ENCODE measurements at regions of chr7 and their contacts with region 1.

Region 1: DNA sequence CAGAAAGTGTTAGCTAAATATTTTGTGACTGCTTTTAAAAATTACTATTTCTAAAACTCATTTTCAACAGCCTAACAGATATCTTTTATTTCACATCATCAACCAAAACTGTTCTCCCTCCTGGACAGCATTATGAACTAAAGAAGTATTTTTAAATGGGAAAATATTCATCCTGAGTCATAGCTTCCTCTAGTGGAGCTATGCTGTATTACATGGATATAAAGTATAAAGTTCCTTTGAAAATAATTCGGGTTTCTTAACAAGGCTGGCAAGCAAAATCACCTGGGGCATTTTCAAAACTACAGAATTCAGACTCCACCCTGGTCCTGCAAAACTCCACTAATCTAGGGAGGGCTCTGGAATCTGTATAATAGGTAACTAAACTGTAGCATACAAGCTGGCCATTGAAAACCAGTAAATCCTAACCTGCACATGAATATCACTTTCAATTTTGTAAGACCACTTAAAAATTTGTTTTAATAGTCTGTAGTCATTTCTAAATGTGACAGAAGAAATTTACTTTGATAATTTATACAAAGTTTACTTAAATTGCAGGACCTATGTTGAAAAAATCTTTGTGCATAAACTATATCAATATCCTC is 53.5 kb downstream of the SCIN start:
- DNase-seq: no peak
- H3K4me3 ChIP-seq: no peak overlapping the region
- H3K27ac ChIP-seq: no peak overlapping the region
- H3K4me1 ChIP-seq: no peaks in the 10 kb centered on the region
- H3K27me3 ChIP-seq: no peaks in the 10 kb centered on the region
- CTCF ChIP-seq: peak in 2 of 3 experiments; percentile 41 to 48; a peak in 2 of 4 replicates
- EP300 ChIP-seq: no peak
- POLR2A ChIP-seq: no peak
- RAD21 ChIP-seq: peak; percentile 68 to 78

Region 2: DNA sequence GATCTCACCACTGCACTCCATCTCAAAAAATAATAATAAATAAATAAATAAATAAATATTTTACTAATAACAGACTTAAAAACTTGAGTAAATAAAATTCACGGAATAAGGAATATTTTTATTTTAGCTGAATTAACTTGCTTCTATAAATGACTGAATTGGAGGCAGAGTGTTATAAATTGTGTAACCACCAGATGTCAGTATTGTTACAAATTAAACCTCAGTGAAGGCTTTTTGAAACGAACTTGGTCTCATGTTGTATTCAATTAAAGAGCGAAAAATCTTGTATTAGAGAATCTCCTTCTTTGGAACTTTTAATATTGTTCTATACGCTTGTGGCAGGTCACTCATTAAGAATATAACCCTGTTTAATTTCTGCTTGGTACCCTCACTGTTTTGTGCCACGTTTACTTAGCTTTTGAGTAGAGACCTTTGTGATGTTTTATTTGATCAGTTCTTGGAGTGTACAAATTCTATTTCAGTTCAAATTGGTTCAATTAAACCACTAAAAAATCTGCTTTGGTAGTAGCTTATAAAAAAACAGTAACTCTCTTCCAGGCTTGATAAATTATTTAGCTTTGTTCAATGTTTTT is 99.1 kb before region 1 on chr7:
- CTCF ChIA-PET with region 1: interaction called, 84 read pairs
- POLR2A ChIA-PET with region 1: no interaction called
- DNase-seq: no peak
- H3K4me3 ChIP-seq: no peak overlapping the region
- H3K27ac ChIP-seq: no peak overlapping the region
- H3K4me1 ChIP-seq: no peaks in the 10 kb centered on the region
- H3K27me3 ChIP-seq: no peaks in the 10 kb centered on the region
- CTCF ChIP-seq: peak in 2 of 3 experiments; percentile 31 to 44; a peak in 2 of 4 replicates
- EP300 ChIP-seq: no peak
- POLR2A ChIP-seq: no peak
- RAD21 ChIP-seq: peak; percentile 67 to 81

Region 3: GRCh38 chr7:12529971-12530710 is 93.9 kb before region 1 on chr7:
- CTCF ChIA-PET with region 1: interaction called, 84 read pairs
- POLR2A ChIA-PET with region 1: no interaction called
- DNase-seq: no peak
- H3K4me3 ChIP-seq: no peak overlapping the region; a peak in 1 of 8 replicates
- H3K27ac ChIP-seq: no peak overlapping the region
- H3K4me1 ChIP-seq: no peaks in the 10 kb centered on the region; a peak in 2 of 7 replicates
- H3K27me3 ChIP-seq: no peaks in the 10 kb centered on the region
- CTCF ChIP-seq: no peak
- EP300 ChIP-seq: no peak
- POLR2A ChIP-seq: no peak
- RAD21 ChIP-seq: no peak

Region 4: GRCh38 chr7:12570534-12571461 is 53.2 kb before region 1 on chr7 and contains the start of gene SCIN:
- CTCF ChIA-PET with region 1: interaction called, 12 read pairs
- POLR2A ChIA-PET with region 1: no interaction called
- DNase-seq: peak in 1 of 2 experiments; percentile 75
- H3K4me3 ChIP-seq: peak within 1 kb of the TSS; percentile 39 to 62 (median 56)
- H3K27ac ChIP-seq: no peak within 1 kb of the TSS
- H3K4me1 ChIP-seq: peaks cover 0 to 2% (median 1%) of the 10 kb centered on the region in 4 experiments; a peak in 2 of 7 replicates
- H3K27me3 ChIP-seq: peaks cover 4 to 29% (median 23%) of the 10 kb centered on the region in 4 experiments
- CTCF ChIP-seq: no peak
- EP300 ChIP-seq: no peak
- POLR2A ChIP-seq: 0 out of 3 replicates have a peak, but pooled peaks of 1 of the 2 experiments have one; percentile 18
- RAD21 ChIP-seq: no peak
- total RNA-seq, gene SCIN: 1.9 and 2.3 TPM in 2 replicates

Region 5: DNA sequence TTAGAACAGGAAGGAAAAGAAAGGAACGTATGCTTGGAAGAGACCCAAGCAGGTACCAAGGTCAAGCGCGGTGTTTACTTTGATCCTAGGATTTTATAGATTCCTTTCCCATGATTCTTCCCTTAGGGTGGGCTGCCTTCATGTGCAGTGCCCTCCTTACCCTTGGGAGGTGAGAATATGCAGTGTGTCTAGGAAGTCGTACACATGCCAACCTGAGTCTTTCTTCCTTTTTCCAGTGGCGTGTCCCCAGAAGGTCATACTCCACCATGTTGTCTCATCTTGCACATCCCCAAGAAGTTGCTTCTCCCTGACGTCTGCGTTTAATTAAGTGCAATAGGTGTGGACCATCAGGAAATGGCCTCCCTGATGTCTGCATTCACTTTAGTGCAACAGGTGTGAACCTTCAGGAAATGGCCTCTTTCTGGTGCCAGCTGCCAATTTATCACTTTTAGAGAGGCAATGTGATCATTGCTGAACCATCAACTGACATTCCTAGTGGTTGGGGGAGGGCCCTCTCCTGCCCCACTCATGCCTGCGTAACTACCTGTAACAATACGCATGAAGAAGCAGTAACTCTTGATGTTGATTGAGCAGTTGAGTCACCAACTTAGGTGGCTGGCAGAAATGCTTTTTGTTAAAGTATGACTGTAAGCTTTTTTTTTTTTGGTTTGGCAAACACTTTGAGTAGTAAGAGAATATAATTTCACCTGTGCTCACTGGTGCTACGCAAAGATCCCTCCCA is 27.8 kb before region 1 on chr7:
- CTCF ChIA-PET with region 1: interaction called, 12 read pairs
- POLR2A ChIA-PET with region 1: no interaction called
- DNase-seq: no peak
- H3K4me3 ChIP-seq: no peak overlapping the region
- H3K27ac ChIP-seq: no peak overlapping the region
- H3K4me1 ChIP-seq: no peaks in the 10 kb centered on the region
- H3K27me3 ChIP-seq: no peaks in the 10 kb centered on the region
- CTCF ChIP-seq: no peak
- EP300 ChIP-seq: no peak
- POLR2A ChIP-seq: no peak
- RAD21 ChIP-seq: no peak

Region 6: DNA sequence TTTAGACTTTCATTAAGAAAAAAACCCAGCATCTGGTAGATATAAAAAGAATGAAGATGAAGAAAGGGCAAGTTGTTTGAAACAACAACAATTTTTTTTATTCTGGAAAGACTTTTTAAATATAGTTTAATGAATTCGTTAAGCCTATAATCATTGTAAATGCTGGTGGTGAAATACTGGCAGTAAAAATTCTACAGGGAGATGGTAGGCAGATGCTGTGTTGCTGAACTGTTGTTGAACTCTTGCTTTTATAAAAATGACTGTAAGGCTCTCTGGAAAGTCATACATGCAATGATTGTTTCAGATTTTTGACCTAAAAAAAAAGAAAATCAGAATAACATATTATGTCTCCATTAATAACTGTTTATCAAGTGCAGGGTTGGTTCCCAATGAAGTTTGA is 14.4 kb before region 1 on chr7:
- CTCF ChIA-PET with region 1: interaction called, 29 read pairs
- POLR2A ChIA-PET with region 1: interaction called, 4 read pairs
- DNase-seq: no peak
- H3K4me3 ChIP-seq: no peak overlapping the region
- H3K27ac ChIP-seq: no peak overlapping the region
- H3K4me1 ChIP-seq: no peaks in the 10 kb centered on the region
- H3K27me3 ChIP-seq: no peaks in the 10 kb centered on the region
- CTCF ChIP-seq: no peak
- EP300 ChIP-seq: no peak
- POLR2A ChIP-seq: no peak
- RAD21 ChIP-seq: no peak

Region 7: DNA sequence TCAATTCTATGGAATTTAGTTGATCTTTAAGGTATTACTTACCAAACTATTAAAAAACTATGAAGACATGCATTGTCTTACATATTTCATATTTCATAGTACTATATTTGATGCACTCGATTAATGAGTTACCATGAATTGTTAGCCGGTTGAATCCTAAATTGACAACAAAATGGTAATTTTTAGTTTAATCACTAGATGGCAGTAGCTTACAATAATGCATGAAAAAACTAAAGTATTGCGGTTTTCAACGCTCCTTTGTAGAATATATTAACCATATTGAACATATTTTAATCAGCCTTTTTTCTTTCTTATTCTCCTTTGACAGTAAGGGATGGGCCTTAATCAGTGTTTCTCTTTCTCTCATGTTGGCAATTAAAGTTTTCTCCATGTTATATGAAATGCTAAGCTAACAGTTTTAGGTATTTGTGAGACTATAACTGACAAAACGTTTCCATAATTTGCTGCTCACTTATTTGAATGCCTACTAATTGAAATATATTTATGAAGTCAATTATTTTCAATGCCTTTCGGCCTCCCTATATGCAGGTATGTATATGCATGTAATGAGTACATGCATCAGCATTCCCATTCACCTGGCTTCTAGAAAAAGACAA is 15.0 kb after region 1 on chr7:
- CTCF ChIA-PET with region 1: interaction called, 24 read pairs
- POLR2A ChIA-PET with region 1: no interaction called
- DNase-seq: no peak
- H3K4me3 ChIP-seq: no peak overlapping the region
- H3K27ac ChIP-seq: no peak overlapping the region
- H3K4me1 ChIP-seq: no peaks in the 10 kb centered on the region
- H3K27me3 ChIP-seq: no peaks in the 10 kb centered on the region
- CTCF ChIP-seq: peak in 1 of 3 experiments; percentile 39; a peak in 2 of 4 replicates
- EP300 ChIP-seq: no peak
- POLR2A ChIP-seq: no peak
- RAD21 ChIP-seq: peak; percentile 62 to 73

Measured in H1 (cell line).